Thyroid gland (tissue), 4 donors: ENCODE measurements at regions of chr6 and their contacts with region 1.

Region 1: DNA sequence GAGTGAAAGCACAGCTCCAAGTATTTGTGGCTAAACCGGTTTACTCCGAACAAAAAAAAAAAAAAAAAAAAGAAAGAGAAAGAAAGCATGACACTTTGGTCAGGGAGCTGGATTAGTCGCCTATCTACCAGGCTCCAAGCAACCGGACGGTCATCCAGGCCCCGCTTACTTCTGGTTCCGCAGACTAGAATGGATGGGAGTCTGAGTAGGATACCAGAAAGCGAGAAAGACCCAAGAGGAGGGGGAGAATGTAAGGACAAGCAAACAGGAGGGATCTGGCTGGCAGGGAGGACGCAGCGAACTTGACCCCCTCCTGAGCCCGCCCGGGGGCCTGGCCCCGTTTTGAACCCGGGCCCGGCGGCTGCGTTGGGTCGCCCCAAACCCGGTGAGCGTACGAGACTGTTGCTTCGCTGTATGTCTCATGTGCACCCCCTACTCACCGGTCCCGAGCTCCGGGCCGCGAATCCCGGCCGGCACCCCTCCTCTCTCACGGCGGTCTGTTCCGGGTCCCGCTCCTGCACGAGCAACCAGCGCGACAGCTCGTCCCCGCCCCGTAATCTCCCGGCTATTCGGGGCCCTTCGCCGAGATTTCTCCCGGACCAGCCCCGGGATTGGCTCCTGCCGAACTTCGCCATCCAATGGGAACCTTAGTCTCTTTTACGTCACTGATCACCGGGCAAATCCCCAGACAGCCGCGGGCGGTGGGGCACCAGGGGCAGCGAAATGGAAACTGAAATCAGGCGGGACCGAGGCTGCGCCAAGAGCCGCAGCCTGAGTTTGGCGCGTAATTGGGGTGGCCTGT is at the start of gene TRIM26:
- DNase-seq: peak; percentile 98 to 99
- H3K4me3 ChIP-seq: peak within 1 kb of the TSS; percentile 62 to 89 (median 81)
- H3K27ac ChIP-seq: peak within 1 kb of the TSS; percentile 94 to 99 (median 97)
- H3K4me1 ChIP-seq: peaks cover 28 to 38% of the 10 kb centered on the region in 2 donors
- H3K27me3 ChIP-seq: no peaks in the 10 kb centered on the region
- CTCF ChIP-seq: peak in 1 of 6 experiments; percentile 10
- POLR2A ChIP-seq: peak; percentile 89 to 100
- total RNA-seq, gene TRIM26: 52.9 to 72.2 (median 62.4) TPM

Region 2: DNA sequence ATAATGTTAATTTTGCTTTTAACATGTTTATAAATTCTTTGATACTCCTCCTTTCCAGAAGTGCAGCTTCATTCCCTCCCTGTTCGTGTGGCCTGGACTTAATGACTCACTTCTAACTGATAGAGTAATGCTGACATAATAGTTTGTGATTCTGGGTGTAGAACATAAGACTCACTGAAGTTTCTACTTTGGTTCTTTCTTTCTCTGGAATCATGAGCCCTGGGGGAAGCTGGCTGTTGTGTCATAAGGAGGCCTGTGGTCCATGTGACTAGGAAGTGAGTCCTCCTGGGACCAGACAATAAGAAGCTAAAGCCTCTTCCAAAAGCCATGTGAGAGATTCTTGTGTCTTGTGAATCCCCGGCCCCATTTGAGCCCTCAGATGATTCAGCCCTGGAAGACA is 415.9 kb before region 1 on chr6:
- intact Hi-C with region 1: no loop called
- DNase-seq: no peak
- H3K4me3 ChIP-seq: no peak overlapping the region
- H3K27ac ChIP-seq: no peak overlapping the region
- H3K4me1 ChIP-seq: peaks cover under 1 to 5% of the 10 kb centered on the region in 2 donors
- H3K27me3 ChIP-seq: no peaks in the 10 kb centered on the region
- CTCF ChIP-seq: no peak
- POLR2A ChIP-seq: no peak

Region 3: GRCh38 chr6:30326526-30327260 is 113.6 kb after region 1 on chr6 and contains the start of gene TRIM39:
- intact Hi-C with region 1: loop called (anchors 10 kb)
- DNase-seq: peak; percentile 85 to 88
- H3K4me3 ChIP-seq: peak within 1 kb of the TSS; percentile 81 to 94 (median 87)
- H3K27ac ChIP-seq: peak within 1 kb of the TSS; percentile 92 to 94 (median 93)
- H3K4me1 ChIP-seq: peaks cover 17 to 27% of the 10 kb centered on the region in 2 donors
- H3K27me3 ChIP-seq: no peaks in the 10 kb centered on the region
- CTCF ChIP-seq: peak in 1 of 6 experiments; percentile 16
- POLR2A ChIP-seq: peak; percentile 67 to 83
- total RNA-seq, gene TRIM39: 23.5 to 28.5 (median 25.8) TPM

Region 4: GRCh38 chr6:30396833-30397479 is 183.9 kb after region 1 on chr6:
- intact Hi-C with region 1: loop called (anchors 10 kb)
- DNase-seq: peak; percentile 82 to 85
- H3K4me3 ChIP-seq: no peak overlapping the region
- H3K27ac ChIP-seq: no peak overlapping the region
- H3K4me1 ChIP-seq: no peaks in the 10 kb centered on the region
- H3K27me3 ChIP-seq: no peaks in the 10 kb centered on the region
- CTCF ChIP-seq: peak; percentile 48 to 89 (median 65)
- POLR2A ChIP-seq: no peak

Region 5: DNA sequence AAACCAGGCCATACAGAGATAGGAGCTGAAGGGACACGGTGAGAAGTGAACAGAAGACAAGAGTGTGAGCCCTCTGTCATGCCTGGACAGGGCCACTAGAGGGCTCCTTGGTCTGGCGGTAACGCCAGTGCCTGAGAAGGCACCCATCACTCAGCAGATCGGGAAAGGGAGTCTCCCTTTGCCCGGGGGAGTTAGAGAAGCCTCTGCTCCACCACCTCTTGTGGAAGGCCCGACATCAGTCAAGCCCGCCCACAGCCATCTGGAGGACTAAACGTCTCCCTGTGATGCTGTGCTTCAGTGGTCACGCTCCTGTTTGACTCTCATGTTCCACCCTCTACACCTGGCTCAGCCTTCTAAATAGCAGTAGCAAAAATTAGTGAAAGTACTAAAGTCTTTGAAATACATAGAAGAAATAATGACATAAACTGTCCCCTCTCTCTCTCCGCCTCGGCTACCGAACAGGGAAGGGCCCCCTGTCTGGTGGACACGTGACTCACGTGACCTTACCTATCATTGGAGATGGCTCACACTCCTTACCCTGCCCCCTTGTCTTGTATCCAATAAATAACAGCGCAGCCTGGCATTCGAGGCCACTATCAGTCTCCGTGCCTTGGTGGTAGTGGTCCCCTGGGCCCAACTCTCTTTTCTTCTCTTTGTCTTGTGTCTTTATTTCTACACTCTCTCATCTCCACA is 198.6 kb after region 1 on chr6:
- intact Hi-C with region 1: no loop called
- DNase-seq: peak; percentile 46 to 59
- H3K4me3 ChIP-seq: no peak overlapping the region
- H3K27ac ChIP-seq: no peak overlapping the region
- H3K4me1 ChIP-seq: no peaks in the 10 kb centered on the region
- H3K27me3 ChIP-seq: no peaks in the 10 kb centered on the region
- CTCF ChIP-seq: peak; percentile 41 to 85 (median 50)
- POLR2A ChIP-seq: no peak

Region 6: GRCh38 chr6:31252625-31253024 is 1039.6 kb after region 1 on chr6:
- intact Hi-C with region 1: no loop called
- DNase-seq: no peak
- H3K4me3 ChIP-seq: no peak overlapping the region
- H3K27ac ChIP-seq: no peak overlapping the region
- H3K4me1 ChIP-seq: no peaks in the 10 kb centered on the region
- H3K27me3 ChIP-seq: no peaks in the 10 kb centered on the region
- CTCF ChIP-seq: no peak
- POLR2A ChIP-seq: no peak